ENCODE measurements at regions of chr3 and their contacts with region 1.

Region 1: GRCh38 chr3:37967260-37967881 is 23.2 kb upstream of the VILL start:
- DNase-seq: peak; percentile 85
- ATAC-seq: peak; percentile 96
- H3K4me3 Mint-ChIP-seq: no peak overlapping the region
- H3K27ac Mint-ChIP-seq: no peak overlapping the region
- H3K4me1 Mint-ChIP-seq: peaks cover 31% of the 10 kb centered on the region
- H3K27me3 Mint-ChIP-seq: no peaks in the 10 kb centered on the region
- CTCF ChIP-seq: peak; percentile 77

Region 2: DNA sequence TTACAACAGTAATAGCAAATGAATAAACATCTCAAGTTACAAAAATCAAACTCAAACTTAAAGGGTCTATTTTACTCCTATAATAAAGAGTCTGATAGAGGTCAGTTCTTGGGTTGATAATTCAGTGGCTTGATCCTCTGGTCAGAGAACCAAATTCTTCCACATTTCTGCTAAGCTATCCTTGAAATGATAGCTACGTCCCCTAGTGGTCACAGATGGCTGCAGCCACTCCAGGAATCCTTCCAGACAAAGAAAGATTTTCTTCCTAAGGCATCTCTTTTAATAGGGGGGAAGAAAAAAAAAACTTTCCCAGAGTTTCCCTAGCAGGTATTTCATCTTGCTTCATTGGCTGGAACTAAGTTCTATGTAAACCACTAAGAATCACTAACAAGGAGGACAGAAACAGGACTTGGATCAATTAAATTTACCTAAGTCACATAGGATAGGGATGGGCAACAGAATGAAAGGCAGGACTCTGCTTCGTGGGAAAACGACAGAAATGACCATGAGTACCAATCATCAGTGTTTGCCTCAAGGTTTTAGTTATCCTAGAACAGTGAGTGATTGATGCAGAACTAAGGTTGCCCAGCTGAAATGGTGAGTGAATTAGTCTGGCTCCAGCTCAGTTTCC is 1426.4 kb before region 1 on chr3:
- CTCF ChIA-PET with region 1: no interaction called
- POLR2A ChIA-PET with region 1: no interaction called
- DNase-seq: peak; percentile 58
- ATAC-seq: peak; percentile 86
- H3K4me3 Mint-ChIP-seq: no peak overlapping the region
- H3K27ac Mint-ChIP-seq: no peak overlapping the region
- H3K4me1 Mint-ChIP-seq: no peaks in the 10 kb centered on the region
- H3K27me3 Mint-ChIP-seq: no peaks in the 10 kb centered on the region
- CTCF ChIP-seq: peak; percentile 74

Region 3: DNA sequence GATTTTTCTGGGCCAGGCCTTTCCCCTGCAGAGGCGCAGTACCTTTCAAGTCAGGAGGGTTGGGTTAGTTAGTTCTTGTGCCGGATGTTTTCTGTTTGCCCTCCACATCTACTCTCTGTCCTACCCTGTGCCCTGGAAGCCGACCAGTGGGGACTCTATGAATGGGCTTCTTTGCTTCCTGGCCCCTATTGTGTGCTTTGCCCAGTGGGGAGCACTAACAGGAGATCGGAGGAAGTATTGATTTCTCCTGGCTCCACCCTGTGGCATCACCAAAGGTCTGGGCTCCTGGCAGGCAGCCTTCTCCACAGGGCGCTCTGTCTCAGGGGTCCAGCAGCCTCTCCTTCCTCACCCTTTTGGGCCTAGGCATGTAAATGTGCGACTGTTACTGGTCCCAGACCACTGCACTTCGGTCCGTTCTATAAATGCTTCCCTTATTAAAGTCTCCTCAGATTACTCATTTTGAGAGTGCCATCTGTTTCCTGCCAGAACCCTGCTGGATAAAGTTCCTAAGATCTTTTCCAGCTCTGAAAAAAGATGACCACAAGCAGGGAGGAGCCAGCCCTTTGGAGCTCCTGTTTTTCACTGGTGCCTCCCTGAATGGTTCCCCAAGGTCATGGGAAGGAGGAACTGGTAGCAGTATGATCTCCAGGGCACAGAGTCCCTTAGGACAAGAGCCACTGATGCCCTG is 61.2 kb before region 1 on chr3:
- CTCF ChIA-PET with region 1: interaction called, 12 read pairs
- POLR2A ChIA-PET with region 1: no interaction called
- DNase-seq: no peak
- ATAC-seq: peak; percentile 55
- H3K4me3 Mint-ChIP-seq: no peak overlapping the region
- H3K27ac Mint-ChIP-seq: peak overlapping the region; percentile 19; the same call in 1 of the 2 replicates
- H3K4me1 Mint-ChIP-seq: peaks cover 33% of the 10 kb centered on the region
- H3K27me3 Mint-ChIP-seq: no peaks in the 10 kb centered on the region
- CTCF ChIP-seq: no peak

Region 4: DNA sequence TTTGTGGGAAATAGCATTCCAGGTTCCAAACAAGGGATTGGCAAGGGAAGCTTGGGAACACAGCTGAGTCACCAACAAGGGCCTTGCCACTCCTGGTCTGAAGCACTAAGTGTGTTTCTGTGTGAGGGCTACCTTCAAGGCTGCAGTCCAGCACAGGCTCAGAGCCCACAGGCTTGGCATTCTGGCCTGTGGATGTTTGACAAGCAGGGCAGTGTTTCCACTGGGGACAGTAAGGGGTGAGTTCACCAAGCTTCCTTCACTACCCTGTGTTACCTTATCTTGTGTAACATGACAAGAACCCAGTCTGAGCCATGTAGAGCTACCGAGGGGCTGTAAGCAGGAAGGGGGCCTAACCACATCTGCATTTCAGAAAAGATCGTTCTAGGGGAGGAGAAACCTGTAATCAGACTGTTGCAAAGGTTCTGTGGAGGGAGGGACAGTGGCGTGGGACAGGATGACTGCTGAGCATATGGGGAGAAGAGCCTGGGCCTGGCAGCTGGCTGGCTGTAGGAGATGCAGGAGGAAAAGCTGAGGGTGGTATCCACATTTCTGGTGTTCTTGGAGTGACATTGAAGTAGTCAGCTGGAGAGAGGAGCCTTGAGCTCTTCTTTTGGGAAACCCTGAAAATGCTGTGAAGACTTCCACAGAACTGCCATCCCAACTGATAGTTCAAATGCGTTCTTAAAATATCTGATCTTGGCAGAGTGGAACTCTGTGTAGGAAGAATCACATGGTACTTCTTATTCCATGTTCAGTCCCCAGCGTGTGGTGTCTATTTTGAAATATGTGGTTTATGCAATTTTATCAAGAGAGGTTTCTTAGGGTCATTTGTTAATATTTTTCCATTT is 44.4 kb before region 1 on chr3:
- CTCF ChIA-PET with region 1: interaction called, 10 read pairs
- POLR2A ChIA-PET with region 1: no interaction called
- DNase-seq: no peak
- ATAC-seq: no peak
- H3K4me3 Mint-ChIP-seq: no peak overlapping the region
- H3K27ac Mint-ChIP-seq: no peak overlapping the region
- H3K4me1 Mint-ChIP-seq: peaks cover 25% of the 10 kb centered on the region
- H3K27me3 Mint-ChIP-seq: no peaks in the 10 kb centered on the region
- CTCF ChIP-seq: no peak

Region 5: DNA sequence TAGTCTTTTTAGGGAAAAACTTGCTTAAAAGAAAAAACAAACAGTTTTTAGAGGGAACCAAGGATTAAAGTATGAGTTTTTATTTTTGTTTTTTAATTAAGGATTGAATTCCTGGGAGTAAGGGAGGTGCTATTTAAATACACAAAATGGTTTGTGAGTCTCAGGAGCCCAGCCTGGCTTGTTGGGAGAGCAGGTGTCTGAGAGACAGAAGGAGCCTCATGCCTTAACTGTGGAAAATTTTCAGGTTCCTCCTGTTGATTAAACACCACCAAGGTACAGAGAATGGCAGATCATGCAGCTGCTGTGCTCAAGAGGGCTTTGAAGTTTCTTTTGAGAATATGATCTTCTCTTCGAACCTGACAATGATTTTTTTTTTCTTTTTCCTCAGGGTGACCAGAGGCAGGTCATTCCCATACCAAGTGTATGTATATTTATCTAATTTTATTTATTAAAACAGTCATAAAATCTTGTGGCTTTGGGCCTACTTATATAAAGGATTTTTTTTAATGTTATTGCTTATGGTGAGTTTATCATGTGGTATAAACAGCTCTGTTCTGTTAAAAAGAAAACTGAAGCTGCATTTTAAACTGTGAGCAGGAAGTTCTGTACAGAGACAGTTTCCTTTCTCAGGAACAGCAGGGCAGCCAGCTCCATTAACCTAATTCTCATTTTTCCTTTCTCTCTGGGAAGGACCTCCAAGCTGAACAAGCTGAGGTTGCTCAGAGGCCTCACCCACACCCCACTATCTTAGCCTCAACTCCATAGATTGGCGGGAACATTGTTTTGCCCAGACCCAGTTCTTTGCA is 10.4 kb before region 1 on chr3:
- CTCF ChIA-PET with region 1: interaction called, 21 read pairs
- POLR2A ChIA-PET with region 1: no interaction called
- DNase-seq: no peak
- ATAC-seq: no peak
- H3K4me3 Mint-ChIP-seq: no peak overlapping the region
- H3K27ac Mint-ChIP-seq: peak overlapping the region; percentile 86
- H3K4me1 Mint-ChIP-seq: peaks cover 30% of the 10 kb centered on the region
- H3K27me3 Mint-ChIP-seq: no peaks in the 10 kb centered on the region
- CTCF ChIP-seq: no peak

Region 6: DNA sequence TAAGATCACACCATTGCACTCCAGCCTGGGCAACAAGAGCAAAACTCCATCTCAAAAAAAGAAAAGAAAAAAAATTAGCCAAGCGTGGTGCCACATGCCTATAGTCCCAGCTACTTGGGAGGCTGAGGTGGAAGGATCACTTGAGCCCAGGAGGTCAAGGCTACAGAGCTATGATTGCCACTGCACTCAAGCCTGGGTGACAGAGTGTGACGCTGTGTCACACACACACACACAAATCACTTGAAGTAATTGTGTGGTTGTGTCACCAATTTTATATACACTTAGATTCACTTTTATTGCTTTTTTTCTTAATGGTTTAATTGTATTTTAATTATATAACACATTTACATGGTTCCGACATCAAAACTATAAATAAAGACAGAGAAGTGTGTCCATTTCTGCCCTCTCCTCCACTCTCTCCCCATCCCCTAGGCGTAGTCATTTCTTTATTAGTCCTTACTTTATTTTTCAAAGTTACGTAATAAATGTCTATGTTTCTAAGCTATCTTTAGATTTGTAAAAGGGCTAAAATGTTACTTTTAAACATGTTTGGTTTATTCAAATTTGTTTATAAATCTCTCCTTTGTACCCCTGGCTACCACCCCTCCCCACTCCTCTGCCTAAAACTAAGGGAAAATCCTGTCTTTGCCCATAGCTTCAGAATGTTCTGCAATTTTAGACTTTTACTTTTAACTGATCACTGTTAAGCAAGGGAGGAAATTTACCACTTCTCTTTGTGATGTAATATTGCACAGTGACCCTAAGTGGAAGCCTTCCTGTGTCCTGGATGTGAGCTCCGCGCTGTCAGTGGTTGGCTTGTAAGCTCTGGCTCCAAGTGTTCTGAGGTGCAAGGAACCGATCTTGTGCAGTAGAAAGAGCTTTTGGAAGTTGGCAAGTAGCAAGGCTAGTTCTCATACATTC is 12.4 kb after region 1 on chr3:
- CTCF ChIA-PET with region 1: interaction called, 24 read pairs
- POLR2A ChIA-PET with region 1: no interaction called
- DNase-seq: no peak
- ATAC-seq: no peak
- H3K4me3 Mint-ChIP-seq: no peak overlapping the region
- H3K27ac Mint-ChIP-seq: no peak overlapping the region
- H3K4me1 Mint-ChIP-seq: peaks cover 8% of the 10 kb centered on the region
- H3K27me3 Mint-ChIP-seq: no peaks in the 10 kb centered on the region
- CTCF ChIP-seq: no peak

Region 7: GRCh38 chr3:38136777-38137614 is 169.6 kb after region 1 on chr3 and contains the start of gene ACAA1:
- CTCF ChIA-PET with region 1: no interaction called
- POLR2A ChIA-PET with region 1: no interaction called
- DNase-seq: peak; percentile 100
- ATAC-seq: peak; percentile 93
- H3K4me3 Mint-ChIP-seq: peak within 1 kb of the TSS; percentile 88
- H3K27ac Mint-ChIP-seq: peak within 1 kb of the TSS; percentile 89
- H3K4me1 Mint-ChIP-seq: peaks cover 37% of the 10 kb centered on the region
- H3K27me3 Mint-ChIP-seq: no peaks in the 10 kb centered on the region
- CTCF ChIP-seq: no peak
- total RNA-seq, gene ACAA1: 34.4 to 46.5 TPM (median 39.0 TPM) in 3 replicates